Natural killer cell (primary cell): ENCODE measurements at regions of chr2 and their contacts with region 1.

Region 1: DNA sequence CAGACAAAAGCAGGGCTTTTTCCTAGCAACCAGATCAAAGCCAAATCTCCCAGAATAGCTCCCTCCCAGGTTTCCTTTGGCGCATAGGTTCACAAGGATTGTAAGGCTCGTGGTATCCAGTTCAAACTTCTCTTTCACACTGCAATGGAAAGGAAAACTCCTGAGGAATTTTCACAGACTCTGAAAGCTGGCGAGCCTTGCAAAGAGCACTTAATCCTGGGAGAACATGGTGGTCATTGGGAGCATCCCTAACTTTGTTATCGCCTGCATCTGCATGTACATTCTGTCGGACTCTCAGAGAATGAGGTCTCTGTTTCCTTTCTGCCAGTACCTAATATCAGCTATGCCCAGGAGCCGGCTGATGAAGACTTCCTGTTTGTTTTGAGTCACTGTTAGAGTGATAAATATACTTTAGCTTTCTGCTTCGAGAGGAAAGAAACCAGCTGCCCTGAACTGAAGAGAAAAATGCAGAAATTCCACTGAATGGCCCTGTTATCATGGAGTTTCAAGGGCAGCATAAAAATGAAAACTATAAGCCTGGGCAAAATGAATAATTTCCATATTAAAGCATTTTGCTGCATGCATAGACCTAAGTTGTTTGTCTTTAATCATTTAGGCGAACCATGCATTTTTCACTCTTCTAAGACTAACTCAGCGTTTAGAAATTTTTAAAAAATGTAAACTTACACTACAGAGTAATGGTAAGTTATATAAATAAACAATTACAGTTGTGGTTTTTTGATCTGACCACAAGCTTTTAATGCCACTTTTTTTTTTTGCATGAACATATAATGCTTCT is 76.4 kb upstream of the ZEB2 start:
- DNase-seq: peak in 1 of 2 donors; percentile 41
- ATAC-seq: peak; percentile 53 to 70 (median 55)
- H3K4me3 ChIP-seq: no peak overlapping the region
- H3K4me3 Mint-ChIP-seq: peak overlapping the region; percentile 72
- H3K27ac ChIP-seq: peak overlapping the region; percentile 95
- H3K27ac Mint-ChIP-seq: peak overlapping the region; percentile 93 to 95
- H3K4me1 ChIP-seq: peaks cover 27% of the 10 kb centered on the region
- H3K4me1 Mint-ChIP-seq: peaks cover 59 to 61% of the 10 kb centered on the region in 2 donors
- H3K27me3 ChIP-seq: no peaks in the 10 kb centered on the region
- H3K27me3 Mint-ChIP-seq: no peaks in the 10 kb centered on the region
- CTCF ChIP-seq: no peak

Region 2: DNA sequence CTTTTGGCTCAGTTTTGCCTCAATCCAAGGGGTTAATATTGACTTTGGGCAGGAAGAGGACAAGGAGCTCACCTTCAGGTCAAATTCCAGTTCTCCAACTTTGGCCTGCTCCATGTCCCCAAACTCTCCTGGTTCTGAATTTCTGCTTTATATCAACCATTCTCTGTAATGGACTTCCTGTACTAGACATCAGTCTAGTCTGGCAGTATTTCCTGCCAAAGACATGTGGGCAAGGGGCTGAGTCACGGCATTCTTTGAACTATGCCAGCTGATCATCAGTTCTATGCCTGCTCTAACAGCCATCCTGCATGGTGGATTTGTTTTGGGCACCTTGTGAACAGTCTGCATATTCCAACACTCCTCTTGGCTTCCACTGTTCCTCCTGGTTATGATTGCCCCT is 275.8 kb before region 1 on chr2:
- intact Hi-C with region 1: loop called (anchors 5 kb)
- DNase-seq: peak; percentile 28 to 80
- ATAC-seq: peak; percentile 75 to 87 (median 84)
- H3K4me3 ChIP-seq: no peak overlapping the region
- H3K4me3 Mint-ChIP-seq: peak overlapping the region; percentile 52
- H3K27ac ChIP-seq: peak overlapping the region; percentile 32
- H3K27ac Mint-ChIP-seq: peak overlapping the region; percentile 74 to 90
- H3K4me1 ChIP-seq: peaks cover 9% of the 10 kb centered on the region
- H3K4me1 Mint-ChIP-seq: peaks cover 38 to 48% of the 10 kb centered on the region in 2 donors
- H3K27me3 ChIP-seq: no peaks in the 10 kb centered on the region
- H3K27me3 Mint-ChIP-seq: no peaks in the 10 kb centered on the region
- CTCF ChIP-seq: no peak

Region 3: GRCh38 chr2:144510294-144510991 is 85.8 kb before region 1 on chr2:
- intact Hi-C with region 1: loop called (anchors 2 kb)
- DNase-seq: peak; percentile 69 to 84
- ATAC-seq: peak; percentile 59 to 80 (median 69)
- H3K4me3 ChIP-seq: peak overlapping the region; percentile 39
- H3K4me3 Mint-ChIP-seq: peak overlapping the region; percentile 95
- H3K27ac ChIP-seq: peak overlapping the region; percentile 92
- H3K27ac Mint-ChIP-seq: no peak overlapping the region
- H3K4me1 ChIP-seq: peaks cover 62% of the 10 kb centered on the region
- H3K4me1 Mint-ChIP-seq: peaks cover 94 to 97% of the 10 kb centered on the region in 2 donors
- H3K27me3 ChIP-seq: no peaks in the 10 kb centered on the region
- H3K27me3 Mint-ChIP-seq: peaks cover 4 to 7% of the 10 kb centered on the region in 2 donors
- CTCF ChIP-seq: no peak

Region 4: GRCh38 chr2:144548532-144549191 is 47.6 kb before region 1 on chr2:
- intact Hi-C with region 1: loop called (anchors 5 kb)
- DNase-seq: peak in 1 of 2 donors; percentile 71
- ATAC-seq: peak; percentile 97 to 100 (median 98)
- H3K4me3 ChIP-seq: no peak overlapping the region
- H3K4me3 Mint-ChIP-seq: peak overlapping the region; percentile 13
- H3K27ac ChIP-seq: no peak overlapping the region
- H3K27ac Mint-ChIP-seq: peak overlapping the region; percentile 52 to 85
- H3K4me1 ChIP-seq: peaks cover 4% of the 10 kb centered on the region
- H3K4me1 Mint-ChIP-seq: peaks cover 5 to 12% of the 10 kb centered on the region in 2 donors
- H3K27me3 ChIP-seq: no peaks in the 10 kb centered on the region
- H3K27me3 Mint-ChIP-seq: no peaks in the 10 kb centered on the region
- CTCF ChIP-seq: no peak

Region 5: GRCh38 chr2:144630459-144631215 is 34.4 kb after region 1 on chr2:
- intact Hi-C with region 1: loop called (anchors 5 kb)
- DNase-seq: no peak
- ATAC-seq: no peak
- H3K4me3 ChIP-seq: no peak overlapping the region
- H3K4me3 Mint-ChIP-seq: no peak overlapping the region
- H3K27ac ChIP-seq: no peak overlapping the region
- H3K27ac Mint-ChIP-seq: peak overlapping the region in 1 of 2 donors; percentile 39
- H3K4me1 ChIP-seq: no peaks in the 10 kb centered on the region
- H3K4me1 Mint-ChIP-seq: peaks cover 31 to 33% of the 10 kb centered on the region in 2 donors
- H3K27me3 ChIP-seq: no peaks in the 10 kb centered on the region
- H3K27me3 Mint-ChIP-seq: peaks cover 0 to 14% of the 10 kb centered on the region in 2 donors
- CTCF ChIP-seq: no peak